AG04450 (cell line): ENCODE measurements at regions of chr19 and their contacts with region 1.

Region 1: GRCh38 chr19:47483800-47484690 is at the start of gene KPTN:
- DNase-seq: peak; percentile 78
- H3K4me3 ChIP-seq: peak within 1 kb of the TSS; percentile 80
- H3K27ac ChIP-seq: peak within 1 kb of the TSS; percentile 83
- H3K27me3 ChIP-seq: no peaks in the 10 kb centered on the region
- CTCF ChIP-seq: peak; percentile 97
- polyA plus RNA-seq, gene KPTN: 5.7 and 7.4 TPM in 2 replicates

Region 2: GRCh38 chr19:47494729-47495128 is 10.7 kb after region 1 on chr19:
- CTCF ChIA-PET with region 1: interaction called, 13 read pairs
- POLR2A ChIA-PET with region 1: no interaction called
- DNase-seq: no peak
- H3K4me3 ChIP-seq: no peak overlapping the region
- H3K27ac ChIP-seq: no peak overlapping the region
- H3K27me3 ChIP-seq: no peaks in the 10 kb centered on the region
- CTCF ChIP-seq: no peak

Region 3: GRCh38 chr19:47507012-47507411 is 23.0 kb after region 1 on chr19:
- CTCF ChIA-PET with region 1: no interaction called
- POLR2A ChIA-PET with region 1: interaction called, 10 read pairs
- DNase-seq: no peak
- H3K4me3 ChIP-seq: no peak overlapping the region
- H3K27ac ChIP-seq: no peak overlapping the region
- H3K27me3 ChIP-seq: no peaks in the 10 kb centered on the region
- CTCF ChIP-seq: no peak